ENCODE measurements at regions of chr13 and their contacts with region 1.

Region 1: GRCh38 chr13:110382229-110382628 is 75.1 kb downstream of the COL4A2 start:
- DNase-seq: no peak
- H3K4me3 Mint-ChIP-seq: no peak overlapping the region
- H3K27ac Mint-ChIP-seq: no peak overlapping the region
- H3K4me1 Mint-ChIP-seq: peaks cover 12% of the 10 kb centered on the region
- H3K27me3 Mint-ChIP-seq: peaks cover 8% of the 10 kb centered on the region

Region 2: GRCh38 chr13:110187641-110188161 is 194.5 kb before region 1 on chr13:
- intact Hi-C with region 1: no loop called
- DNase-seq: no peak
- H3K4me3 Mint-ChIP-seq: no peak overlapping the region
- H3K27ac Mint-ChIP-seq: no peak overlapping the region
- H3K4me1 Mint-ChIP-seq: no peaks in the 10 kb centered on the region
- H3K27me3 Mint-ChIP-seq: no peaks in the 10 kb centered on the region

Region 3: DNA sequence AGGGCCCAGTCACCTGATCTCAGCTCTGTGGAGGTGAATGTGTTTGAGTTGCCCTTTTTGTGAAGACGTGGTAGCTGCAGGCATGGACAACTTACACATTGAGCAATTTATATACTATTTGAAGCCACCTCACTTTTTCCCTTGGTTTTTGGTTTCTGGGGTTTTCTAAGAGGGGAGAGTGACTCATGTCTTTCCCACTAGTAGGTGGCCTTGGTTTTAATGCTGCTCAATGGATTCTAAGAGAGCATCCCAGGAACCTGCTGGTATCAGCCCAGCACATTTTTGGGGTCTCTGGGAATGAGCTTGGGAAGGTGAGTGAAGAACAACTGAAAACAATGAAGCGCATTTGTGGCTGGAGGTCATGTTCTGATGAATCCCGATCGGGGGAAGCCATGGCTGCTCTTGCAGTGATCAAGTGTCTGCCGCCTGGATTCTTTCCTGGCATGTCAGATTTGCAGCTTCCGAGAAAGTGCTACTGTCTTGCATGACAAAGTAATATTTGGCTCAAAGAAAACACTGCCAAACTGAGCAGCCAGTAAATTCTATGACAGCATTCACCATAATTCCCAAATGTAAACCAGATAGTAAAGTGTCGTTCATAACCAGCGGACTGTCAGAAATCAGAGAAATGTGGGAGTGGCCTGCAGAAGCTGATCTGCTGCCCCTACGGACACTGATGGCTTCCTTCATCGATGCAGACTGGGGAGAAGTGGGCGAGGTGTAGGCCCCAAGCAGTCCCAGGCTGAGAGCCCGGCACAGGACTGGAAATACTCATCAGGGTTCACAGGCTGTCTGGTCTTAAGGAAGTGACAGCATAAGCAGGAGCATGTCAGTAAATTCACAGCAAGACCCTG is 23.6 kb after region 1 on chr13:
- intact Hi-C with region 1: loop called (anchors 2 kb)
- DNase-seq: no peak
- H3K4me3 Mint-ChIP-seq: no peak overlapping the region
- H3K27ac Mint-ChIP-seq: no peak overlapping the region
- H3K4me1 Mint-ChIP-seq: peaks cover 10% of the 10 kb centered on the region
- H3K27me3 Mint-ChIP-seq: peaks cover 63% of the 10 kb centered on the region

Measured in activated T-helper 1 cell treated with anti-CD3 and anti-CD28 coated beads, Interleukin-12 subunit alpha, Interleukin-12 subunit beta, Interleukin-2, Interleukin-4 antibody, amounts not matched to agents 30 ng/mL and 10 ng/mL and 1 ng/mL, durations not matched to agents 14 hours and 24 hours and 36 hours (primary cell).